ENCODE measurements at regions of chr7 and their contacts with region 1.

Region 1: GRCh38 chr7:28955718-28956619 is 2.2 kb downstream of the TRIL start:
- H3K4me3 ChIP-seq: peak overlapping the region; percentile 66
- H3K27ac ChIP-seq: peak overlapping the region; percentile 85; the same call in 1 of the 2 replicates
- H3K4me1 ChIP-seq: no peaks in the 10 kb centered on the region
- CTCF ChIP-seq: peak; percentile 84

Region 2: GRCh38 chr7:28926871-28927597 is 28.9 kb before region 1 on chr7:
- CTCF ChIA-PET with region 1: interaction called, 86 read pairs
- POLR2A ChIA-PET with region 1: interaction called, 3 read pairs
- H3K4me3 ChIP-seq: peak overlapping the region; percentile 48
- H3K27ac ChIP-seq: peak overlapping the region; percentile 6; the same call in 1 of the 2 replicates
- H3K4me1 ChIP-seq: peaks cover under 1% of the 10 kb centered on the region; the same call in 1 of the 2 replicates
- CTCF ChIP-seq: no peak; the same call in 1 of the 2 replicates

Region 3: DNA sequence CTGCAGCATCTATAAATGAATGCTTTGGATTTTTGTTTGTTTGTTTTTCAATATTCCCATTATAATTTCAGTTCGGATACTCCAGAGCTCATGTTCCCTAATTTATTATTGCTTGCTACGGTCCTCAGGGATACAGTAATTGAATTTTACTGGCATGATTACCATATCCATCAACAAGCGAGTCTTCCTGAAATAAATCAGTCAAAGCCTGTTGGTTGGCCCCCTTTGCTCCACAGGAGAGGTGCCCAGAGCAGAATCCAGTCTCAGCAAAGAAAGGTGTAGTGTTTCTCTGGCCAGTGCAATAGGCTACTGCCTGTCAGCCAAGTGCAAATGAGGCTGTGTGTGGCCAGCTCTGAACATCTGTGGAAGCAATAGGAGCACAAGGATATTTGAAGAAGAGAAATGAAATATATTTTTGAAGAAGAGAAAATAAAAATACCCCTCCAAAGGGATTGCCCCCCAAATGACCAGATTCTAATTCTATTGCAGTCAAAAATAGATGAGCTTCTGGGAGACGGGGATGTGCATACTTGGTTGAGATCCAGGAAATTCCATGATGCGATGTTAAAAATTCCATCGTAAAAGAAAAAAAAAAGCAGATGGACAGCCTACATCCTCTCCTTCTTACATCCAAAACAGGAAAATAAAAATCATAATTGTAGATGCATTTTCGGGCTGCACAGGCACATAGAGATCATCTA is 16.0 kb before region 1 on chr7:
- CTCF ChIA-PET with region 1: interaction called, 20 read pairs
- POLR2A ChIA-PET with region 1: no interaction called
- H3K4me3 ChIP-seq: no peak overlapping the region
- H3K27ac ChIP-seq: no peak overlapping the region; the same call in 1 of the 2 replicates
- H3K4me1 ChIP-seq: peaks cover 12% of the 10 kb centered on the region; the same call in 1 of the 2 replicates
- CTCF ChIP-seq: no peak

Region 4: DNA sequence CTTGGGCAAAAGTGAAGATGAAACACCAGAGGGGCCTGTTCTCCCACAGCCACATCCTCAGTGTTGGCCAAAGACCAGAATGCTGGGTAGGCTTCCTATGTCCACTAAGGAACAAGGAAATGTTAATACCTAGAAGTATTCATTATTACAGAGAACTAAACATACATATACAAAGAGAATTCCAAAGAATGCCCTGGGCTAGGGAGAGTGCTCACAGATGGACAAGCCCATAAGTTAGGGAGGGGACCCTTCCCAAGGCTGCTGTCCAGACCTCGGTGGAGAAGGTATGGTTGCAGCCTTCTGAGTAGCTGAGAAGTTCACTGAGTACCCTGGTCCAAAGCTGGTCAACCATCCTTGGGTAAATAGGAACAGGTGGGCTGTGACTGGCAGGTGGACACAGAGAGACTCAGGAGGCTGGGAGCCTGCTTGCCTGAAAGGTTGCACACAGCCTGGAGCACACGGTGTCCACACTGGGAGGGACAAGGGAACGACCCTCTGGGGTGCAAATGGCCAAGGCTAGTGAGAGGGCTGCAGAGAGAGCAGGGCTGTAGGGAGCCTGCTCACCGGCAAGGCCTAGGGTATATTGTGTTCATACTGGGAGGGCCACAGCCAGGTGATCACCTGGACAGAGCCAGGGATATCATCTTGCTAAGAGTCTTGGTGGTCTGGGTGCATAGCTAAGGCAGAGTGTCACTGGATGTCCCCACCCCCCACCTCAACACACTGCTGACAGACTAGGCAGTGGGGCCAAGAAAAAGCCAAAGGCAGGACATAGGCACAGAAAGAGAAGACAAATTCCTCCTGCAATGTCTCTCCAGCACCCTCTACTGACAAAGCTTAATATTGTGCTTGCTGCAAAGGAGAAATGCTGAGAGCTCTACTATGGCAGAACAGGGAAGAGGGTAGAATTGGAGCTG is 150.0 kb after region 1 on chr7:
- CTCF ChIA-PET with region 1: interaction called, 30 read pairs
- POLR2A ChIA-PET with region 1: interaction called, 4 read pairs
- H3K4me3 ChIP-seq: no peak overlapping the region
- H3K27ac ChIP-seq: no peak overlapping the region
- H3K4me1 ChIP-seq: no peaks in the 10 kb centered on the region
- CTCF ChIP-seq: peak; percentile 64

Region 5: DNA sequence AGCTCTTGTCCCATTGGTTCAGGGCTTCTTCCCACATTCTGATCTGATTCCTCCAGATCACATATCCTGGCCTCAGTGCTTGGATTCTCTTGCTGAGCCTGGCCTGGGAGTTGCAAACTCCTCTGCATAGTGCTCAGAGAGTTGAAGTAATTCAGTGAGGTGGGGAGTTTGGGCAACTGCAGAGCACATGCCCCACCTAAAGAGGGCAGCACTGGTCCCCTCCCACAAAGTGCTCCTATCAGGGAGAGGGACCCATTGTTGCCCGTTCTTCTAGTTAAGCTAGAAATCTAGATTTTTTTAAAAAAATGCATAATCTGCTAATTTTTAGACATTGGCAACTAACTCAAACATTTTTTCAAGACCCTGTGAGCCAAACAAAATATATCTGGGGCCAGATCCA is 283.7 kb after region 1 on chr7:
- CTCF ChIA-PET with region 1: no interaction called
- POLR2A ChIA-PET with region 1: no interaction called
- H3K4me3 ChIP-seq: no peak overlapping the region
- H3K27ac ChIP-seq: no peak overlapping the region
- H3K4me1 ChIP-seq: no peaks in the 10 kb centered on the region
- CTCF ChIP-seq: no peak

Region 6: GRCh38 chr7:29408841-29409243 is 452.9 kb after region 1 on chr7:
- CTCF ChIA-PET with region 1: interaction called, 15 read pairs
- POLR2A ChIA-PET with region 1: no interaction called
- H3K4me3 ChIP-seq: no peak overlapping the region
- H3K27ac ChIP-seq: no peak overlapping the region
- H3K4me1 ChIP-seq: no peaks in the 10 kb centered on the region
- CTCF ChIP-seq: peak; percentile 29; the same call in 1 of the 2 replicates